Heart left ventricle (tissue), 16 donors: ENCODE measurements at regions of chr7 and their contacts with region 1.

Region 1: GRCh38 chr7:92827464-92828120 is 8.8 kb downstream of the CDK6 start:
- DNase-seq: peak in 1 of 5 donors; percentile 29
- ATAC-seq: peak in 2 of 4 donors; percentile 21 to 54
- H3K4me3 ChIP-seq: no peak overlapping the region
- H3K27ac ChIP-seq: peak overlapping the region in 3 of 12 donors; percentile 6 to 17 (median 9)
- H3K4me1 ChIP-seq: peaks cover 3 to 88% (median 40%) of the 10 kb centered on the region in 12 donors
- H3K27me3 ChIP-seq: no peaks in the 10 kb centered on the region
- CTCF ChIP-seq: no peak
- POLR2A ChIP-seq: no peak

Region 2: GRCh38 chr7:92547579-92547978 is 280.0 kb before region 1 on chr7:
- intact Hi-C with region 1: no loop called
- DNase-seq: peak in 4 of 5 donors; percentile 32 to 80 (median 58)
- ATAC-seq: peak; percentile 83 to 95 (median 94)
- H3K4me3 ChIP-seq: no peak overlapping the region
- H3K27ac ChIP-seq: peak overlapping the region in 4 of 12 donors; percentile 13 to 71 (median 25)
- H3K4me1 ChIP-seq: peaks cover 0 to 18% (median 0%) of the 10 kb centered on the region in 12 donors
- H3K27me3 ChIP-seq: no peaks in the 10 kb centered on the region
- CTCF ChIP-seq: no peak
- POLR2A ChIP-seq: no peak

Region 3: GRCh38 chr7:92790992-92791391 is 36.6 kb before region 1 on chr7:
- intact Hi-C with region 1: loop called in 5 of 10 experiments (anchors 5 to 10 kb)
- DNase-seq: peak in 1 of 5 donors; percentile 47
- ATAC-seq: peak in 2 of 4 donors; percentile 61 to 64
- H3K4me3 ChIP-seq: no peak overlapping the region
- H3K27ac ChIP-seq: peak overlapping the region in 1 of 12 donors; percentile 52
- H3K4me1 ChIP-seq: peaks cover 0 to 50% (median 24%) of the 10 kb centered on the region in 12 donors
- H3K27me3 ChIP-seq: no peaks in the 10 kb centered on the region
- CTCF ChIP-seq: no peak
- POLR2A ChIP-seq: no peak